Cardiac septum (tissue), 1 donor: ENCODE measurements at regions of chr4 and their contacts with region 1.

Region 1: GRCh38 chr4:72525938-72526337 is 43.1 kb downstream of the ADAMTS3 start:
- DNase-seq: peak; percentile 87

Region 2: GRCh38 chr4:72567821-72568675 is 42.1 kb after region 1 on chr4:
- intact Hi-C with region 1: loop called (anchors 5 kb)
- DNase-seq: peak; percentile 85